SK-N-SH (cell line): ENCODE measurements at regions of chr1 and their contacts with region 1.

Region 1: DNA sequence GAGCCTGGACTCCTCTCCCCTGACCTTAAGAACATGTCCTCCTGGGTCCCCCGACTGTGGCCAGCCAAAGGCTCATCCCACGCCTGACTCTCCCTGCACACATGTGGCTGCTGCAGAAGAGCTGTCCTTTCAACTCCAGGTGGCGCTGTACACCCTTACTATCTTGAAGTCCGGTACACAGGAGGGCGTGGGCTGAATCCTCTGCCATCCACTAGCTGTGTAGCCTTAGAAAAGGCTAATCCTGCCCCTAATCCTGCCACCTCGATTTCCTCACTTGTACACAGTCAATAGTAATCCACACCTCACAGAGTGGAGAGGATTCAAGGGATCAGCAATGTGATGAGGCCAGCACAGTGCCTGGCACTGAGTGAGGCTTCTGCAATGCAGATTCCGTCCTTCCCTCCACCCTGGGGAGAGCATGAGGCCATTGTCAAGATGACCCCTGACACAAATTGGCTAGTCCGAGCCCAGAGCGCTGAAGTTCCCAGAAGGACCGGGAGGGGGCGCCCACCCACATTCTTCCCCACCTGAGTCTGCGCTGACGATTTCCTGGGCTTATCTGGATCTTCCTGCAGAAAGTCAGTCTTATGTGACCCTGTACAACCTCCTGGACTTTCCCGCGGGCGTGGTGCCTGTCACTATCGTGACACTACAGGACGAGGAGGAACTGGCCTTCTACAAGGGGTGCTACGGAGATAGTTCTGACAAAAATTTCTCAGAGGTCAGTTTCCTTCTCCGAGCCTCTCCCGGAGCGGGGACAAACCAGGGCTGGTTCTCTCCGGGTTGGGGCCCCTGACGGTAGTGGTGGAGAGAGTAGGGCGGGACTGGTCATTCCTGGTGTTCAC is 47.1 kb upstream of the DMBX1 start:
- DNase-seq: peak; percentile 81
- H3K4me3 ChIP-seq: peak overlapping the region; percentile 49 to 55
- H3K27ac ChIP-seq: 0 out of 4 replicates have a peak overlapping the region, but pooled peaks of 1 of the 2 experiments have one; percentile 53
- H3K4me1 ChIP-seq: peaks cover 0 to 6% of the 10 kb centered on the region in 2 experiments; a peak in 1 of 4 replicates
- H3K27me3 ChIP-seq: peaks cover 4% of the 10 kb centered on the region; the same call in 1 of the 2 replicates
- CTCF ChIP-seq: peak; percentile 91
- EP300 ChIP-seq: no peak
- RAD21 ChIP-seq: peak; percentile 58

Region 2: GRCh38 chr1:46425726-46426125 is 16.8 kb before region 1 on chr1:
- CTCF ChIA-PET with region 1: interaction called, 105 read pairs
- POLR2A ChIA-PET with region 1: no interaction called
- DNase-seq: no peak
- H3K4me3 ChIP-seq: no peak overlapping the region
- H3K27ac ChIP-seq: no peak overlapping the region
- H3K4me1 ChIP-seq: no peaks in the 10 kb centered on the region
- H3K27me3 ChIP-seq: peaks cover 9% of the 10 kb centered on the region; the same call in 1 of the 2 replicates
- CTCF ChIP-seq: no peak
- EP300 ChIP-seq: no peak
- RAD21 ChIP-seq: no peak

Region 3: DNA sequence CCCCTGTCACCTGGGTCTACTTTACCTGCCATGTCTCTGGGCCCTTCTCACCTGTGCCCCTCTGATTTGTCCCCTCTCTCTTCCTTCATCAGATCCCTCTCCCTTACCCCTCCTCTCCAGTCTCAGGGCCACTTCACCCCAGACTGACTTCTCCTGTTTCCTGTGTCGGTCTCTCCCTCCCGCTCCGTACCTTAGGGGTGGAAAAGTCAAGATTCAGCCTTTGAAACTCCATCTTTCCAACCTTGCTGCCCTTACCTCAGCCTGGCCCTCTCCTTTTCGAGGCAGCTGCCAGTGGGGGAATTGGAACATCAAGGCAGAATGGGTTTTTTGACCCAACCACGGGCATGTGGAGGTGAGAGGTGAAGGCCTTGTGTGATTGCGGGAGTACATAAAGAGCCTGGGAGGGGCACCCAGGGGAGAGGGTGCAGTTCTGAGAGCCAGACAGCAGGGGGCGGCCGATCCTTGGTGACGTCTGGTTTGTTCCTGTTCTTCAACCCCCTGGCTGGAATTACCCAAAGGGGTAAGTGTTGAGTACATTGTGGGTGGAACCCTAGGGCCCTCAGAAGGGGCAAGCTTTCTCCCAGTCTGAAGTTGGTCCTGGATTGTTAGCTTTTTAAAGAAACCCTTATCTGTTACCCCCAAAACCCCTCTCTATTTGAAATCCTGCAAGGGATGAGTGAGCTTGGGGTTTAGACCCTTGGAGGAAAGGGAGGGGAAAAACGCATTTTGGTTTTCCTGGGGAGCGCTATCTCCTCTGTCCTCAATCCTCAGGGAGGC is 34.8 kb after region 1 on chr1:
- CTCF ChIA-PET with region 1: interaction called, 79 read pairs
- POLR2A ChIA-PET with region 1: no interaction called
- DNase-seq: peak; percentile 91
- H3K4me3 ChIP-seq: no peak overlapping the region; a peak in 1 of 4 replicates
- H3K27ac ChIP-seq: no peak overlapping the region
- H3K4me1 ChIP-seq: peaks cover 0 to 9% of the 10 kb centered on the region in 2 experiments; a peak in 1 of 4 replicates
- H3K27me3 ChIP-seq: no peaks in the 10 kb centered on the region
- CTCF ChIP-seq: peak; percentile 93
- EP300 ChIP-seq: no peak
- RAD21 ChIP-seq: peak; percentile 80

Region 4: DNA sequence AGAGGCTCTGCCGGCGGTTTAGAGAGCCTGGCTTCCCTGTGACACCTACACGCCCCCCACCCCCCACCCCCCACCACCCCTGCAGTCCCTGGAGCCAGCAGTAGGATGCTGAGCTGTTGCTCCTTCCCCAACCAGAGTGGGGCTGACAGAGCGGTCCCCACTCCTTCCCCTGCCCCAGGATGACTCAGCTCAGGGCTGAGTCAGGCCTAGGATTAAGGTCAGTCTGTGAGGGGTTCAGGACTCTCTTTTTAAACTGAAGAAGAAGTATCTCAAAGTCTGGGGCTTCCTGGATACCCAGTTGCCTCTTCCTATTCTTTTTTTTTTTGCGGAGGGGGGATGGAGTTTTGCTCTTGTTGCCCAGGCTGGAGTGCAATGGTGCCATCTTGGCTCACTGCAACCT is 66.2 kb after region 1 on chr1:
- CTCF ChIA-PET with region 1: interaction called, 11 read pairs
- POLR2A ChIA-PET with region 1: no interaction called
- DNase-seq: no peak
- H3K4me3 ChIP-seq: no peak overlapping the region
- H3K27ac ChIP-seq: no peak overlapping the region
- H3K4me1 ChIP-seq: no peaks in the 10 kb centered on the region
- H3K27me3 ChIP-seq: no peaks in the 10 kb centered on the region
- CTCF ChIP-seq: no peak
- EP300 ChIP-seq: no peak
- RAD21 ChIP-seq: no peak

Region 5: DNA sequence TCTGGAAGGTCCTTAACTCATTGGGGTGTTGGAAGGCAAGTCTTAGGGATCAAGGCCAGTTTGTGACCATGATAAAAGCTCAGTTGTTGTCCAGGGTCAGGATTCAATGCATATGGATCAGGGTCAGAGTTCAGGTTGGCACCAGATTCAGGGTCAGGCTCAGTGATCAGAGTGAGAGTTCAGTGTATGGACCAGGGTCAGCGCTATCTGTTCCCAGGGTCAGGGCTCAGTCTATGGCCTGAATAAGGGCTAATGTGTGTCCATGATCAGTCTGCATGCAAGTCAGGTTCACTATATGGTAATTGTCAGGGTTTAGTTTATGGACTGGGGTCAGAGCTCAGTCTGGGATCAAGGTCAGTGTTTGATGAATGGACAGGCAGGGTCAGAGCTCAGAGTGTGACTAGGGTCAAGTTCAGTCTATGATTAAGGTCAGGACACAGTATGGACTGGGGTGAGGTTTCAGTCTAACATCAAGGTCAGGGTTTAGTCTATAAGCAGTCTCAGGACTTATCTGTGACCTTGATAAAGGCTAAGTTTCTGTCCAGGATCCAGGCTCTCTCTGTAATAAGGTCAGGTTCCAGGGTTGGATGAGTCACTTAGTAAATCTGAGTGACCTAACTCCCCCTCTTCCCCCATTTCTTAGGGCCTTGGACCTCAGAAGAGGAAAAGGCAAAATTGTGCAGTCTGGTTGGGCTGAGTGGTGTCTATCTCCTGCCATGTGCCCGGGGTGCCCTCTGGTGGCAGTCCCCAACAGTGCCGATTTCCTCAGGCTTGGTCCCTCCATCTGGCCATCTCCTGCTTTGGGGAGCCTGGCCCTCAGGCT is 85.1 kb after region 1 on chr1:
- CTCF ChIA-PET with region 1: interaction called, 496 read pairs
- POLR2A ChIA-PET with region 1: no interaction called
- DNase-seq: peak; percentile 90
- H3K4me3 ChIP-seq: no peak overlapping the region; a peak in 1 of 4 replicates
- H3K27ac ChIP-seq: no peak overlapping the region
- H3K4me1 ChIP-seq: peaks cover 0 to 4% of the 10 kb centered on the region in 2 experiments; a peak in 1 of 4 replicates
- H3K27me3 ChIP-seq: no peaks in the 10 kb centered on the region; the same call in 1 of the 2 replicates
- CTCF ChIP-seq: peak; percentile 93
- EP300 ChIP-seq: no peak
- RAD21 ChIP-seq: peak; percentile 98

Region 6: GRCh38 chr1:46724991-46725735 is 282.6 kb after region 1 on chr1:
- CTCF ChIA-PET with region 1: interaction called, 25 read pairs
- POLR2A ChIA-PET with region 1: no interaction called
- DNase-seq: peak; percentile 65
- H3K4me3 ChIP-seq: no peak overlapping the region; a peak in 1 of 4 replicates
- H3K27ac ChIP-seq: no peak overlapping the region
- H3K4me1 ChIP-seq: no peaks in the 10 kb centered on the region; a peak in 1 of 4 replicates
- H3K27me3 ChIP-seq: no peaks in the 10 kb centered on the region; the same call in 1 of the 2 replicates
- CTCF ChIP-seq: peak; percentile 84
- EP300 ChIP-seq: no peak
- RAD21 ChIP-seq: peak; percentile 85